Transverse colon (tissue), 4 donors: ENCODE measurements at regions of chrX and their contacts with region 1.

Region 1: DNA sequence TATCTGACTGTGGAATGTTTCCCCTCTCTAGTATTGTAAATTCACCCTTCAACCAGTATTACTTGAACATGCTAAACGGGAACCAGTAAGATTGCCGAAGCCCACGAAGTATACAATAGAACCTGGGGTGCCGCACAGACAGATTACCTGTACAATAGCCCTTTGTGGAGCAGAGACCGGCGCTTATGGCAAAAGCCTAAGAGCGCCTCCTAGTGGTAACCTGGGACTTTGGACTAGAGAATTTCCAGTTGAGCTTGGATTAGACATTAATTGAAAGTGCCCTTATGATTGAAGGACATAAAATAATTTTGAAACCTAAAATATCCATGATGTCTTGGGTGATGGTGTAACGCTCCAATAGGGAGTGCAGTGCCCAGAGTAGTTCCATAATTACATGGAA is 14.1 kb downstream of the ZNF157 start:
- DNase-seq: peak; percentile 73
- H3K4me3 ChIP-seq: no peak overlapping the region
- H3K27ac ChIP-seq: no peak overlapping the region
- H3K4me1 ChIP-seq: no peaks in the 10 kb centered on the region
- H3K27me3 ChIP-seq: no peaks in the 10 kb centered on the region
- CTCF ChIP-seq: peak; percentile 64 to 78 (median 70)
- EP300 ChIP-seq: no peak
- POLR2A ChIP-seq: no peak

Region 2: GRCh38 chrX:47321386-47321785 is 63.1 kb before region 1 on chrX:
- in situ Hi-C with region 1: no loop called
- intact Hi-C with region 1: no loop called
- DNase-seq: peak; percentile 13
- H3K4me3 ChIP-seq: no peak overlapping the region
- H3K27ac ChIP-seq: no peak overlapping the region
- H3K4me1 ChIP-seq: no peaks in the 10 kb centered on the region
- H3K27me3 ChIP-seq: no peaks in the 10 kb centered on the region
- CTCF ChIP-seq: no peak
- EP300 ChIP-seq: no peak
- POLR2A ChIP-seq: no peak

Region 3: DNA sequence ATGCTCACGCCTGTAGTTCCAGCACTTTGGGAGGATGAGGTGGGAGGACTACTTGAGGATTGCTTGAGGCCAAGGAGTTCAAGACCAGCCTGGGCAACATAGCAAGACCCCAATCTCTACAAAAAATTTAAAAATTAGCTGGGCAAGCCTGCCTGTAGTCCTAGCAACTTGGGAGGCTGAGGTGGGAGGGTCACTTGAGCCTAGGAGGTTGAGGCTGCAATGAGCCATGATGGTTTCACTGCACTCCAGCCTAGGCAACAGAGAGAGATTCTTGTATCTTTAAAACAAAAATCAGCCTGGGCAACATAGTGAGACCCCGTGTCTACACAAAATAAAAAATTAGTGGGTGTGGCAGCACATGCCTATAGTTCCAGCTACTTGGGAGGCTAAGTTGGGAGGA is 96.7 kb after region 1 on chrX:
- in situ Hi-C with region 1: no loop called
- intact Hi-C with region 1: no loop called
- DNase-seq: no peak
- H3K4me3 ChIP-seq: no peak overlapping the region
- H3K27ac ChIP-seq: no peak overlapping the region
- H3K4me1 ChIP-seq: peaks cover 0 to 23% (median 0%) of the 10 kb centered on the region in 4 donors
- H3K27me3 ChIP-seq: no peaks in the 10 kb centered on the region
- CTCF ChIP-seq: no peak
- EP300 ChIP-seq: no peak
- POLR2A ChIP-seq: no peak

Region 4: DNA sequence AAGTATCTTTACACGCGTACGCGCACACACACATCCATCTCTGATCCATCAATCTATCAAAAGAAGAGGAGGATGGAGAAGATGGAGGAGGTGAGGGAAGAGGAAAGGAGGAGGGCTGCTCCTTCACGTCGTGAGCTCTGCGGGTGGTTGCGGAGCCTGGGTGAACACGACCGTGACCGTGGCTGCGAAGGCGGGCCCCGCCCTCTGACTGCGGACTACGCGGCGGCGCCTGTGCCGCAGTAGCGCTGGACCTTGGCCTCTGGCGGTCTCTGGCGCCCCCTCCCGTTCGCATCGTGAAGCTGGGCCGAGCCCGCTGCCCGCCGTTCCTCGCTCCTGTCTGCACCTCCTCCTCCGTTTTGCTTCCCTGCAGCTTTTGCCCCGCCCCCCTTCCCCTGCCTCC is 138.8 kb after region 1 on chrX:
- in situ Hi-C with region 1: loop called in 1 of 4 experiments (anchors 25 kb)
- intact Hi-C with region 1: loop called (anchors 10 kb)
- DNase-seq: peak; percentile 88
- H3K4me3 ChIP-seq: peak overlapping the region; percentile 38 to 70 (median 50)
- H3K27ac ChIP-seq: peak overlapping the region in 1 of 4 donors; percentile 45
- H3K4me1 ChIP-seq: no peaks in the 10 kb centered on the region
- H3K27me3 ChIP-seq: no peaks in the 10 kb centered on the region
- CTCF ChIP-seq: peak; percentile 62 to 76 (median 70)
- EP300 ChIP-seq: no peak
- POLR2A ChIP-seq: no peak